PC-9 (cell line): ENCODE measurements at regions of chr17 and their contacts with region 1.

Region 1: DNA sequence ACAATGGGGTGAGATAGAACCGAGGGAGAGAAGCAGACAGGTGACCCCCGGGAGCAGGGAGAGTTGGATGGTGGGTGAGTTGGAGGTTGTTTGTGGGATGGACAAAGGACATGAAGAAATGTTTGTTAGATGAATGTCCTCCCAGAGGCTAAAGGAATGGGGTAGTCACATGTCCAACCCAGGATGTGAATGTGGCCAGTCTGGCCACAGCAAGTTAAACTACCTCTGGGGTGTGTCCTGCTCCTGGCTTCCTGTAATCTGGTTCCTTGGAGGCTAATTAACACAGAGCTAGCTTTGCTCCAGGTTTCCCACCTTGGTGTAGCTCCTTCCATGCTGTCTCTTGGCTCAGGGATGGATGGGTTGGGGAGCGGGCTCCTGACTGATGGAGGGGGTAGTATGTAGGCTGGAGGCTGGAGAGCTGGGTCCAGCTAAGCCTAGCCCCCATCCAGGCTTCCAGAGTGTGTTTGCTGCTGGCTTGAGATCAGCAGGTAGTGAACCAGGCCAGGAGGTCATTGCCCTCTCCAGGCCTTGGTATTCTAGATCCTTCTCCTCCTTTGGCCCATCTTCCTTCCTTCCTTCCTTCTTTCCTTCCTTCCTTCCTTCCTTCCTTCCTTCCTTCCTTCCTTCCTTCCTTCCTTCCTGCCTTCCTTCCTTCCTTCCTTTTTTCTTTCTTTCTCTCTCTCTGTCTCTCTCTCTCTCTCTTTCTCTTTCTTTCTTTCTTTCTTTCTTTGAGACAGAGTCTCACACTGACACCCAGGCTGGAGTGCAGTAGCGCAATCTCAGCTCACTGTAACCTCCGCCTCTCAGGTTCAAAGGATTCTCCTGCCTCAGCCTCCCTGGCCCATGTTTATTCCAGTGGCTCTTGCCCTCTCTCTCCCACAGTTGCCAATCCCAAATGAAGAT is 28.0 kb upstream of the UBE2G1 start:
- DNase-seq: peak; percentile 70 to 95
- H3K4me3 ChIP-seq: peak overlapping the region; percentile 27; the same call in 1 of the 2 replicates
- H3K27ac ChIP-seq: peak overlapping the region; percentile 85
- H3K4me1 ChIP-seq: peaks cover 47% of the 10 kb centered on the region
- H3K27me3 ChIP-seq: no peaks in the 10 kb centered on the region
- CTCF ChIP-seq: no peak

Region 2: DNA sequence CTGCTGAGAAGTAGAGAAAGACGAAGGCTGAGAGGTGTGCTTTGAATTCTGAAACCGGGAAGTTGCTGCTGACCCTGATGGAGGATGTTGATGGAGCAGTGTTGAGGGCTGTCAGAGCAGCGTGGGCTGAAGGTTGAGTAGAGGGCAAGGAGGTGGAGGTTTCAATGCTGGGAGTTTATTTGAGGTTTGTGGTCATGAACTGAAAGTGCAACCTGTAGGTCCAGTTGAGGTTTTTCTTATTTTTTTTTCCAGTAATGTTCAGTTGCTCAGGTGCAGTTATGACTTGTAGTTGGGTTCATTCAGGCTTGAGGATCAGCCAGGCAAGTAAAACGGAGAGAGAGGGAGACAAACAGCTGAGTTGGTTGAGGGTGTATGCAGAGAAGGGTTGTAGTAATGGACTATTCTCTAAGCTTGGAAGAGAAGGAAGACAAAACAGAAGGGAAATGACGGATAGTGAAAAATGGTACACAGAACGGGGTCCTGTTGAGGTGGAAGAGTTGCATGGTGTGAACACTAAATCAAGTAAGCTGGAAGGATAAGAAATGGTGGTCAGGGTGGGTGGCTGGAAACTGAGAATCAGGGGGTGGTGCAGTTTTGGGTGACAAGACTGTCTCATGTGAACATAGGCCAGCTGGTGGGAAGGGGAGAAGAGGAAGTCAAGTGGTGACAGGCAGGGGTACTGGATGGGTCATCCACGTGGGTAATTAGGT is 19.3 kb before region 1 on chr17:
- CTCF ChIA-PET with region 1: interaction called, 3 read pairs
- POLR2A ChIA-PET with region 1: interaction called, 22 read pairs
- intact Hi-C with region 1: no loop called
- DNase-seq: no peak
- H3K4me3 ChIP-seq: no peak overlapping the region
- H3K27ac ChIP-seq: no peak overlapping the region
- H3K4me1 ChIP-seq: peaks cover 26% of the 10 kb centered on the region
- H3K27me3 ChIP-seq: no peaks in the 10 kb centered on the region
- CTCF ChIP-seq: no peak